ENCODE measurements at regions of chr12 and their contacts with region 1.

Region 1: GRCh38 chr12:10364815-10365622 is 24.8 kb downstream of the KLRK1 start:
- DNase-seq: peak; percentile 20 to 83 (median 77)
- ATAC-seq: peak; percentile 86
- H3K4me3 ChIP-seq: peak overlapping the region; percentile 81
- H3K4me3 Mint-ChIP-seq: no peak overlapping the region
- H3K27ac ChIP-seq: peak overlapping the region; percentile 85
- H3K27ac Mint-ChIP-seq: no peak overlapping the region
- H3K4me1 ChIP-seq: peaks cover 21 to 47% of the 10 kb centered on the region in 2 donors
- H3K4me1 Mint-ChIP-seq: peaks cover 6 to 25% (median 13%) of the 10 kb centered on the region in 7 donors
- H3K27me3 ChIP-seq: no peaks in the 10 kb centered on the region
- H3K27me3 Mint-ChIP-seq: peaks cover 0 to 32% (median 0%) of the 10 kb centered on the region in 5 donors

Region 2: GRCh38 chr12:9276990-9277389 is 1088.0 kb before region 1 on chr12:
- CTCF ChIA-PET with region 1: no interaction called
- POLR2A ChIA-PET with region 1: no interaction called
- intact Hi-C with region 1: loop called in 1 of 2 experiments (anchors 5 kb)
- DNase-seq: no peak
- ATAC-seq: no peak
- H3K4me3 ChIP-seq: no peak overlapping the region
- H3K4me3 Mint-ChIP-seq: no peak overlapping the region
- H3K27ac ChIP-seq: no peak overlapping the region
- H3K27ac Mint-ChIP-seq: no peak overlapping the region
- H3K4me1 ChIP-seq: no peaks in the 10 kb centered on the region
- H3K4me1 Mint-ChIP-seq: no peaks in the 10 kb centered on the region
- H3K27me3 ChIP-seq: no peaks in the 10 kb centered on the region
- H3K27me3 Mint-ChIP-seq: peaks cover 0 to 31% (median 17%) of the 10 kb centered on the region in 5 donors

Region 3: GRCh38 chr12:10562306-10562933 is 197.4 kb after region 1 on chr12:
- CTCF ChIA-PET with region 1: interaction called, 9 read pairs
- POLR2A ChIA-PET with region 1: no interaction called
- intact Hi-C with region 1: loop called in 1 of 2 experiments (anchors 1 kb)
- DNase-seq: peak in 7 of 9 donors; percentile 5 to 54 (median 40)
- ATAC-seq: peak; percentile 51
- H3K4me3 ChIP-seq: no peak overlapping the region
- H3K4me3 Mint-ChIP-seq: no peak overlapping the region
- H3K27ac ChIP-seq: no peak overlapping the region
- H3K27ac Mint-ChIP-seq: no peak overlapping the region
- H3K4me1 ChIP-seq: peaks cover 0 to 28% of the 10 kb centered on the region in 2 donors
- H3K4me1 Mint-ChIP-seq: peaks cover 0 to 16% (median 10%) of the 10 kb centered on the region in 7 donors
- H3K27me3 ChIP-seq: no peaks in the 10 kb centered on the region
- H3K27me3 Mint-ChIP-seq: peaks cover 7 to 40% (median 16%) of the 10 kb centered on the region in 5 donors

Region 4: GRCh38 chr12:10673660-10674384 is 308.8 kb after region 1 on chr12 and contains the start of gene STYK1:
- CTCF ChIA-PET with region 1: no interaction called
- POLR2A ChIA-PET with region 1: no interaction called
- intact Hi-C with region 1: loop called (anchors 1 to 10 kb)
- DNase-seq: peak; percentile 40 to 68 (median 59)
- ATAC-seq: peak; percentile 90
- H3K4me3 ChIP-seq: peak within 1 kb of the TSS; percentile 45
- H3K4me3 Mint-ChIP-seq: peak within 1 kb of the TSS; percentile 66 to 85 (median 80)
- H3K27ac ChIP-seq: no peak within 1 kb of the TSS
- H3K27ac Mint-ChIP-seq: peak within 1 kb of the TSS in 5 of 9 donors; percentile 22 to 83 (median 60)
- H3K4me1 ChIP-seq: peaks cover 8 to 18% of the 10 kb centered on the region in 2 donors
- H3K4me1 Mint-ChIP-seq: peaks cover 20 to 64% (median 32%) of the 10 kb centered on the region in 7 donors
- H3K27me3 ChIP-seq: peaks cover 0 to 8% of the 10 kb centered on the region in 2 donors
- H3K27me3 Mint-ChIP-seq: peaks cover 30 to 60% (median 45%) of the 10 kb centered on the region in 5 donors
- total RNA-seq, gene STYK1: 0.24 to 1.6 (median 0.34) TPM in 3 of 5 experiments, not detected in the others

Region 5: DNA sequence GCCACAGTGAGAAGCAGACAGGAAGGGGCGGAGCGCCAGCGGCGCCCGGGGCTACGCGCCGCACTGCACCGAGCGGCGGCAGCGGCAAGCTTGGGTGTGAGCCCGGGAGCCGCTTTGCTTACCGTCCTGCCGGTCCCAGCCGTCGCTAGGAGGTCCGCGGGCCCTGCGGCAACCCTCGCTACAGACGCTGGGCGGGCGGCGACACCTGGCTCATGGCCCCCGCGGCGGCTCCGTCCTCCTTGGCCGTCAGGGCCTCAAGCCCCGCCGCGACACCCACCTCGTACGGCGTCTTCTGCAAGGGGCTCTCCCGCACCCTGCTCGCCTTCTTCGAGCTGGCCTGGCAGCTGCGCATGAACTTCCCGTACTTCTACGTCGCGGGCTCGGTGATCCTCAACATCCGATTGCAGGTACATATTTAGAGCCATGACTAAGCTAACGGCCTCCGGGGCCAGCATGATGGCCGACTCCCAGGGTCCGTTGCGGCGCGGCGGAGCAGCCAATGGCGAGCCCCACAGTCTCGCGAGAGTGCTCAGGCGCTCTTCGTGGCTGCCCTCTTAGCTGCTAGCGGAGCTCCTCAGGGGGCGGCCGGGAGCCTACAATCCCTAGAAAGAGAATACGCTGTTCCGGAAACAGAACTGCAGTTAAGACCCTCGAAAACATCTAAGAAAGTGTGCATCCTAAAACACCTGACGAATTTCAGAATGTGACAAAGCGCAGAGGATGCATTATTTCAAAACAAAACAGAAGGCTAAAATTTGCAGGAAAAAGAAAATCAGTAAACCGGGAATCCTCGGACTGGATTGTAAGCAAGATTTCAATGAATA is 806.3 kb after region 1 on chr12 and contains the start of gene SMIM10L1:
- CTCF ChIA-PET with region 1: no interaction called
- POLR2A ChIA-PET with region 1: interaction called, 6 read pairs
- intact Hi-C with region 1: loop called (anchors 1 to 2 kb)
- DNase-seq: peak; percentile 77 to 88 (median 83)
- ATAC-seq: peak; percentile 97
- H3K4me3 ChIP-seq: peak within 1 kb of the TSS; percentile 74
- H3K4me3 Mint-ChIP-seq: peak within 1 kb of the TSS; percentile 94 to 100 (median 98)
- H3K27ac ChIP-seq: peak within 1 kb of the TSS; percentile 72
- H3K27ac Mint-ChIP-seq: peak within 1 kb of the TSS; percentile 97 to 100 (median 99)
- H3K4me1 ChIP-seq: peaks cover 30 to 36% of the 10 kb centered on the region in 2 donors
- H3K4me1 Mint-ChIP-seq: peaks cover 53 to 82% (median 72%) of the 10 kb centered on the region in 7 donors
- H3K27me3 ChIP-seq: no peaks in the 10 kb centered on the region
- H3K27me3 Mint-ChIP-seq: no peaks in the 10 kb centered on the region
- total RNA-seq, gene SMIM10L1: 7.8 to 12.9 (median 8.5) TPM

Region 6: DNA sequence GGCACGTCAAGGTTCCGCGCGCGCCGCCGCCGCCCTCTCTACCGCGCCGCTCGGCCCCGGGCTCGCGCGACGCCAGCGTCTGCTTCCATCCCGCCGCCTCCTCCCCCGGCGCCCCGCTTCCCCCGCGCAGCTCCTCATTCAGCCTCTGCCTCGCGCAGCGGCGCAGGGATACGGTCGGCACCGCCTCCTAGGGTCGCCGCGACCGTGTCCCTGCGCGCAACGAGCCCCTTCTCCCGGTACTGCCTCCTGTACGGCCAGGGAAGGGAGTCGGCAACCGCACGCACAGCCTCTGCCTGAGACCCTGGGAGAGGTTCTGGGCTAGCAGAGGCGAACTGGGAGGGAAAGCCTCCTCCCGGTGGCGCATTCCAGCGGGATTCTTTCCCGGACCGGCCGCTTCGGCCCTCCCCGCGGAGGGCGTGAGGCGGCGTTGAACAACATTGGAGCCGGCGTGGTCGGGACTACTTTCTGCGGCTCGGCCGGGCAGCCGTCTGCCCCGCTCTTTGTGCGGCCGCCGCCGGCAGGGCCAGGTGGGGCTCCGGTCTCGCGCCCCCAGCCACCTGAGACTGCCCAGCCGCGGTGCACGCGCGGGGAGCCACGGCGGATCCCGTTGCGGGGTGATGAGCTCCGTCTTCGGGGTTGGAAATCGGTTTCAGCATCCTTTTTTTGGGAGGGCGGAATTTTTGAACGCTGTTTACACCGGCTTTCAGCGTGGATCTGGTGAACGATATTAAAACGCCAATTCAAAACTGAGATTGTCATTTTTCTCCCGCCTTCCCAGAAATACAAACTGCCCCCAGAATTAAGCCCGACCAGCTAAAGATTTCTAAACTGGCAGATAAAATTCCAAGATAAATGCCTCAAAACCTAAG is 1902.1 kb after region 1 on chr12 and contains the start of gene LRP6:
- CTCF ChIA-PET with region 1: no interaction called
- POLR2A ChIA-PET with region 1: no interaction called
- intact Hi-C with region 1: loop called in 1 of 2 experiments (anchors 2 kb)
- DNase-seq: peak; percentile 57 to 83 (median 75)
- ATAC-seq: peak; percentile 91
- H3K4me3 ChIP-seq: peak within 1 kb of the TSS; percentile 86
- H3K4me3 Mint-ChIP-seq: peak within 1 kb of the TSS; percentile 79 to 93 (median 88)
- H3K27ac ChIP-seq: peak within 1 kb of the TSS; percentile 68
- H3K27ac Mint-ChIP-seq: peak within 1 kb of the TSS; percentile 29 to 88 (median 73)
- H3K4me1 ChIP-seq: peaks cover 8 to 10% of the 10 kb centered on the region in 2 donors
- H3K4me1 Mint-ChIP-seq: peaks cover 14 to 40% (median 31%) of the 10 kb centered on the region in 7 donors
- H3K27me3 ChIP-seq: peaks cover 0 to 10% of the 10 kb centered on the region in 2 donors
- H3K27me3 Mint-ChIP-seq: peaks cover 0 to 53% (median 14%) of the 10 kb centered on the region in 5 donors
- total RNA-seq, gene LRP6: 1.6 to 12.6 (median 7.4) TPM